WTC11 (cell line): ENCODE measurements at regions of chr4 and their contacts with region 1.

Region 1: DNA sequence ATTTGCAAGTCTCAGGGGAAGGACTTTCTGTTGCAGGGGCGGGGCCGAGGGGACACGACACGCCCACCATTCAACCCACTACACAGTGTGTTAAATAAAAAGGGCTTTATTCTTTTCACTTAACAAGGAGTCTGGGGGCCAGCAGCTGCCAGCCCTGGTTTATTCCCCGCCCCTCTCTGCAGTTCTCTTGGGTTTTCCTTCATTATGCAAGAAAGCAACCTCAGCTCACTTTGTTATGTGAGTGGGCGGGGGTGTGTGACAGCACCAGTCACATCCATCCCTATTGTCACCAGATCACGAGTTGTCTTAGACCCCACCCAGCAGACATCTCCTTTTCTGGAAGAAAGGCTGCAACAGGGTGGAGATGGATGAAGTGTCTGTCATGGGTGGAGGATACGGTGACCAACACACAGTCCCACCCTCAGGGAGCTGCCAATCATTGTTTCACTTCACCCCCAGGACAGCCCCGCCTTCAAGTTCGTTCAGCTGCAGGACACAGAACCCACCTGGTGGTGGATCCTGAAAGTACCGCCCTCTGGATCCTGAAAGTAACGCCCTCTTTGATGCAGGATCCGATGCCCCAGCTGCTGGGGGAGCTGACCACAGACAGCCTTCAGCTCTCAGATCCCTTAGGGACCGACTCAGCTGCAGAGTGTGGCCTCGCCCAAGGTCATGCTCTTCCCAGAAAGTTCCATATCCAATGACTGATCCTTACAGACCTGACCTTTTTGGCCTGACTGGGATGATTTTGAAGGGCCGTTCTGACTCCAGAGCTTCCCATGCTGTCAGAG is 79.6 kb downstream of the SMIM20 start:
- DNase-seq: peak; percentile 96
- ATAC-seq: peak; percentile 94
- H3K4me3 Mint-ChIP-seq: peak overlapping the region; percentile 50
- H3K27ac Mint-ChIP-seq: peak overlapping the region; percentile 100
- H3K4me1 Mint-ChIP-seq: peaks cover 23% of the 10 kb centered on the region
- H3K27me3 Mint-ChIP-seq: peaks cover 4% of the 10 kb centered on the region; the same call in 1 of the 2 replicates
- CTCF ChIP-seq: peak; percentile 62; the same call in 1 of the 2 replicates

Region 2: GRCh38 chr4:25862411-25863346 is 130.9 kb before region 1 on chr4 and contains the start of gene SEL1L3:
- CTCF ChIA-PET with region 1: interaction called, 4 read pairs
- POLR2A ChIA-PET with region 1: interaction called, 12 read pairs
- DNase-seq: peak; percentile 70
- ATAC-seq: peak; percentile 29
- H3K4me3 Mint-ChIP-seq: peak within 1 kb of the TSS; percentile 95
- H3K27ac Mint-ChIP-seq: peak within 1 kb of the TSS; percentile 85
- H3K4me1 Mint-ChIP-seq: peaks cover 45% of the 10 kb centered on the region
- H3K27me3 Mint-ChIP-seq: peaks cover 14% of the 10 kb centered on the region
- CTCF ChIP-seq: no peak
- total RNA-seq, gene SEL1L3: 31.5 to 36.3 TPM (median 35.1 TPM) in 3 replicates

Region 3: GRCh38 chr4:25925486-25926201 is 67.9 kb before region 1 on chr4:
- CTCF ChIA-PET with region 1: interaction called, 16 read pairs
- POLR2A ChIA-PET with region 1: no interaction called
- DNase-seq: peak; percentile 57
- ATAC-seq: peak; percentile 87
- H3K4me3 Mint-ChIP-seq: no peak overlapping the region
- H3K27ac Mint-ChIP-seq: no peak overlapping the region
- H3K4me1 Mint-ChIP-seq: peaks cover 13% of the 10 kb centered on the region
- H3K27me3 Mint-ChIP-seq: no peaks in the 10 kb centered on the region
- CTCF ChIP-seq: peak; percentile 39; the same call in 1 of the 2 replicates

Region 4: DNA sequence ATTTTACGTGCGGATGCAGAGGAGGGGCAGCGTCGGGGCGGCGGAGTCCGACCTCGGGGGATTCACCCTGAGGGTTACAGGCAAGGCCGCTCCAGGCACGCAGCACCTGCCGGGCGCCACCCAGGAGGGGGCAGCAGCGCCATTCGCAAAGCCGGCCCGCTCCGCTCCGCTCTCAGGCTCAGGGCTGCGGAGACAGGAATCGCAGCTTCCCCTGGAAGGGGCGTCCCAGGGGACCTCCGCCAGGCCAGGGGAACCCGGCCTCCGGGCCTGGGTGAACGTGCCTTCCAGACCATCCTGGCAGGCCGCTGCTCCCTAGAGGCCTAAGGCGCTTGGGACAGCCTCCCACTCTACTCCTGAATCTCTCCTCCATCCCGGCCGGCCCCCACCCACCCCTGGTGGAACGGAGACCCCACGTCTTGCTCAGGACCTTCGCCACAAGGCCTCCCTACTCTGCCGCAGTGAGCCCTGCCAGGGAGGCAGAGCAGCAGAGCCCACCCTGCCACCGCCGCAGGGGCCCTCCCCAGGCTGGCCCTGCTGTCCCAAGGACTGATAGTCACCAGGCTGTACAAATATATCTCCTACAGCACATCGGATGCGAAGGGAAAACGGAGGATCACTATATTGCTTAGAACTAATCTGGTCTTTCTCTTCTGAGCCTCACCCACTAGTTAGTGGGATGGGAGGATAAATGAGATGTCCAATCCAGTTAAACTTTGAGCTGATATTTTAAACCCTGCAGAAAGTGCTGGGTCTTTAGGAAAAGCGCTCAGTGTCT is 35.4 kb after region 1 on chr4:
- CTCF ChIA-PET with region 1: interaction called, 30 read pairs
- POLR2A ChIA-PET with region 1: interaction called, 18 read pairs
- DNase-seq: peak; percentile 93
- ATAC-seq: peak; percentile 69
- H3K4me3 Mint-ChIP-seq: peak overlapping the region; percentile 47
- H3K27ac Mint-ChIP-seq: peak overlapping the region; percentile 97
- H3K4me1 Mint-ChIP-seq: peaks cover 53% of the 10 kb centered on the region
- H3K27me3 Mint-ChIP-seq: no peaks in the 10 kb centered on the region; the same call in 1 of the 2 replicates
- CTCF ChIP-seq: peak; percentile 37; the same call in 1 of the 2 replicates

Region 5: DNA sequence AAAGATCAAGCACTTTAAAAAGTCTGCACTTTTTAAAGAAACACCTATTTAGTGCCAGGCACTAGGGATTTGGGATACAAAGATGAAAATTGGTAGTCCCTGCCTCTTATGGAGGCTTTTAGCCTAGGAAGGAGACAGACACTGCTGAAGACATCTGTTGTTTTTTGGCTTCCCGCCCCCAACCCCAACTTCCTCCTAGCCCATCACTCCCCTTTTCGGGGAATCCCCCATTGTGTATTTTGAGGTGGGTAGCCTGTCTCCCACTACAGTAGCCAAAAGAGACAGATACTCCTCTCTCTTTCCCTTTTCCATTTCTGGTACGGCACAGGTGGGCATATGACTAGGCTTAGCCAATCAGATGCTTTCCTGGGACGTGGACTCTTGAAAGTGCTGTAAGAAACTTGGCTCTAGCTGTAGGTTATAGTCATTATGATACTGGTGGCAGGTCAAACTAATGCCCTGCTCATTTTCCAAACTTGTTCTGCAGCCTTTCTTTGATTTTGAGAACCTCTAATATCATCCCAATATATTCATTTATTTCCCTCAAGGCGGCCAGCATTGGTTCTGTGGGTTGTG is 132.6 kb after region 1 on chr4:
- CTCF ChIA-PET with region 1: no interaction called
- POLR2A ChIA-PET with region 1: no interaction called
- DNase-seq: no peak
- ATAC-seq: no peak
- H3K4me3 Mint-ChIP-seq: no peak overlapping the region
- H3K27ac Mint-ChIP-seq: no peak overlapping the region
- H3K4me1 Mint-ChIP-seq: no peaks in the 10 kb centered on the region
- H3K27me3 Mint-ChIP-seq: no peaks in the 10 kb centered on the region; the same call in 1 of the 2 replicates
- CTCF ChIP-seq: no peak

Region 6: GRCh38 chr4:26372525-26373172 is 379.1 kb after region 1 on chr4:
- CTCF ChIA-PET with region 1: no interaction called
- POLR2A ChIA-PET with region 1: no interaction called
- DNase-seq: no peak
- ATAC-seq: peak; percentile 49
- H3K4me3 Mint-ChIP-seq: no peak overlapping the region
- H3K27ac Mint-ChIP-seq: peak overlapping the region; percentile 85
- H3K4me1 Mint-ChIP-seq: peaks cover 79% of the 10 kb centered on the region
- H3K27me3 Mint-ChIP-seq: no peaks in the 10 kb centered on the region
- CTCF ChIP-seq: no peak